ENCODE measurements at regions of chr19 and their contacts with region 1.

Region 1: GRCh38 chr19:41959056-41960053 is at the start of gene RABAC1:
- DNase-seq: peak; percentile 79 to 94
- H3K4me3 ChIP-seq: peak within 1 kb of the TSS; percentile 81 to 92 (median 86)
- H3K27ac ChIP-seq: peak within 1 kb of the TSS; percentile 77; the same call in 1 of the 2 replicates
- H3K4me1 ChIP-seq: peaks cover 3 to 10% (median 6%) of the 10 kb centered on the region in 4 experiments
- H3K27me3 ChIP-seq: no peaks in the 10 kb centered on the region
- CTCF ChIP-seq: peak in 2 of 3 experiments; percentile 25 to 36; a peak in 3 of 4 replicates
- EP300 ChIP-seq: no peak
- POLR2A ChIP-seq: peak in 1 of 2 experiments; percentile 75; a peak in 1 of 3 replicates
- RAD21 ChIP-seq: no peak
- total RNA-seq, gene RABAC1: 123 and 124 TPM in 2 replicates

Region 2: GRCh38 chr19:41859618-41860418 is 99.5 kb before region 1 on chr19 and contains the start of gene RPS19:
- CTCF ChIA-PET with region 1: interaction called, 12 read pairs
- POLR2A ChIA-PET with region 1: interaction called, 31 read pairs
- DNase-seq: peak; percentile 98 to 99
- H3K4me3 ChIP-seq: peak within 1 kb of the TSS; percentile 81 to 99 (median 96)
- H3K27ac ChIP-seq: peak within 1 kb of the TSS; percentile 95
- H3K4me1 ChIP-seq: peaks cover 3 to 26% (median 14%) of the 10 kb centered on the region in 4 experiments
- H3K27me3 ChIP-seq: no peaks in the 10 kb centered on the region
- CTCF ChIP-seq: peak; percentile 45 to 76 (median 54)
- EP300 ChIP-seq: no peak
- POLR2A ChIP-seq: peak; percentile 92 to 96
- RAD21 ChIP-seq: no peak
- total RNA-seq, gene RPS19: 2,817 and 2,831 TPM in 2 replicates

Region 3: DNA sequence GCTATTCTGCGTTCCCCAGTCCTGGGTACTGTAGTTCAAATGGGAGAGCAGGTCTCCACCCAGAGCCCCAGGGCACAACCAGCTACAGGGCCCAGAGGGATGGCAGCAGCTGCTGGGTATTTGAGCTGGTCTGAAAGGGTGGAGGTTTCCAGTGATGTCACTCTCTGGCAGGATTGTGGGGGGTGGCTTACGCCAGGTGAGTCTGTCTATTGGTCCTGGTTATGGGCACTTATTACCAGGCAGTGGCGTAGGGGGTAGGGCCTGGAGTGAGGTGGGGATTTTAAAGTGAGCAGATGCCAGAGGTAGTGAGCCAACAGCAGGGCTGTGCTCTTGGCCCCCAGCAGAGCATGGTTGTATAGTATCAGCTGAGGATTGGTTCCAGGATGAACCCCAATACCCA is 93.1 kb before region 1 on chr19:
- CTCF ChIA-PET with region 1: interaction called, 33 read pairs
- POLR2A ChIA-PET with region 1: interaction called, 54 read pairs
- DNase-seq: no peak
- H3K4me3 ChIP-seq: no peak overlapping the region
- H3K27ac ChIP-seq: peak overlapping the region; percentile 29; the same call in 1 of the 2 replicates
- H3K4me1 ChIP-seq: peaks cover 3 to 22% (median 11%) of the 10 kb centered on the region in 4 experiments
- H3K27me3 ChIP-seq: no peaks in the 10 kb centered on the region
- CTCF ChIP-seq: no peak
- EP300 ChIP-seq: no peak
- POLR2A ChIP-seq: peak in 1 of 2 experiments; percentile 64
- RAD21 ChIP-seq: no peak

Region 4: GRCh38 chr19:41883821-41884733 is 75.3 kb before region 1 on chr19:
- CTCF ChIA-PET with region 1: interaction called, 26 read pairs
- POLR2A ChIA-PET with region 1: no interaction called
- DNase-seq: peak; percentile 90 to 95
- H3K4me3 ChIP-seq: peak overlapping the region; percentile 81 to 97 (median 91)
- H3K27ac ChIP-seq: no peak overlapping the region
- H3K4me1 ChIP-seq: peaks cover 3 to 21% (median 12%) of the 10 kb centered on the region in 4 experiments
- H3K27me3 ChIP-seq: peaks cover 1 to 18% (median 17%) of the 10 kb centered on the region in 4 experiments; a peak in 6 of 7 replicates
- CTCF ChIP-seq: no peak; a peak in 1 of 4 replicates
- EP300 ChIP-seq: peak in 1 of 2 experiments; percentile 85; a peak in 1 of 3 replicates
- POLR2A ChIP-seq: peak in 1 of 2 experiments; percentile 76; a peak in 2 of 3 replicates
- RAD21 ChIP-seq: peak in 1 of 2 experiments; percentile 12; a peak in 1 of 4 replicates

Region 5: GRCh38 chr19:41945135-41945766 is 14.1 kb before region 1 on chr19:
- CTCF ChIA-PET with region 1: interaction called, 25 read pairs
- POLR2A ChIA-PET with region 1: interaction called, 3 read pairs
- DNase-seq: no peak
- H3K4me3 ChIP-seq: no peak overlapping the region
- H3K27ac ChIP-seq: no peak overlapping the region
- H3K4me1 ChIP-seq: no peaks in the 10 kb centered on the region; a peak in 1 of 7 replicates
- H3K27me3 ChIP-seq: peaks cover 9 to 16% (median 15%) of the 10 kb centered on the region in 4 experiments; a peak in 6 of 7 replicates
- CTCF ChIP-seq: no peak
- EP300 ChIP-seq: no peak
- POLR2A ChIP-seq: no peak
- RAD21 ChIP-seq: no peak